ENCODE measurements at regions of chr9 and their contacts with region 1.

Region 1: GRCh38 chr9:27726244-27727081 is 153.2 kb upstream of the C9orf72 start:
- DNase-seq: peak; percentile 76
- ATAC-seq: no peak
- H3K4me3 Mint-ChIP-seq: no peak overlapping the region
- H3K27ac Mint-ChIP-seq: no peak overlapping the region
- H3K4me1 Mint-ChIP-seq: no peaks in the 10 kb centered on the region
- H3K27me3 Mint-ChIP-seq: no peaks in the 10 kb centered on the region

Region 2: GRCh38 chr9:27888661-27889295 is 162.3 kb after region 1 on chr9:
- CTCF ChIA-PET with region 1: no interaction called
- POLR2A ChIA-PET with region 1: no interaction called
- intact Hi-C with region 1: loop called (anchors 1 to 2 kb)
- DNase-seq: peak; percentile 74
- ATAC-seq: peak; percentile 61
- H3K4me3 Mint-ChIP-seq: no peak overlapping the region
- H3K27ac Mint-ChIP-seq: no peak overlapping the region
- H3K4me1 Mint-ChIP-seq: no peaks in the 10 kb centered on the region
- H3K27me3 Mint-ChIP-seq: peaks cover 2% of the 10 kb centered on the region

Region 3: GRCh38 chr9:28073270-28073669 is 346.8 kb after region 1 on chr9:
- CTCF ChIA-PET with region 1: interaction called, 3 read pairs
- POLR2A ChIA-PET with region 1: no interaction called
- intact Hi-C with region 1: loop called (anchors 1 to 5 kb)
- DNase-seq: peak; percentile 8
- ATAC-seq: no peak
- H3K4me3 Mint-ChIP-seq: no peak overlapping the region
- H3K27ac Mint-ChIP-seq: no peak overlapping the region
- H3K4me1 Mint-ChIP-seq: no peaks in the 10 kb centered on the region
- H3K27me3 Mint-ChIP-seq: no peaks in the 10 kb centered on the region

Region 4: GRCh38 chr9:29691758-29692407 is 1965.4 kb after region 1 on chr9:
- CTCF ChIA-PET with region 1: no interaction called
- POLR2A ChIA-PET with region 1: no interaction called
- intact Hi-C with region 1: loop called in 1 of 2 experiments (anchors 5 kb)
- DNase-seq: peak; percentile 8
- ATAC-seq: no peak
- H3K4me3 Mint-ChIP-seq: no peak overlapping the region
- H3K27ac Mint-ChIP-seq: no peak overlapping the region
- H3K4me1 Mint-ChIP-seq: no peaks in the 10 kb centered on the region
- H3K27me3 Mint-ChIP-seq: no peaks in the 10 kb centered on the region